PC-3 (cell line): ENCODE measurements at regions of chr17 and their contacts with region 1.

Region 1: GRCh38 chr17:81738616-81739393 is 26.7 kb downstream of the SLC25A10 start:
- DNase-seq: no peak
- ATAC-seq: no peak
- H3K4me3 ChIP-seq: no peak overlapping the region
- H3K27ac ChIP-seq: no peak overlapping the region
- H3K4me1 ChIP-seq: peaks cover 24% of the 10 kb centered on the region
- H3K27me3 ChIP-seq: no peaks in the 10 kb centered on the region
- CTCF ChIP-seq: no peak

Region 2: DNA sequence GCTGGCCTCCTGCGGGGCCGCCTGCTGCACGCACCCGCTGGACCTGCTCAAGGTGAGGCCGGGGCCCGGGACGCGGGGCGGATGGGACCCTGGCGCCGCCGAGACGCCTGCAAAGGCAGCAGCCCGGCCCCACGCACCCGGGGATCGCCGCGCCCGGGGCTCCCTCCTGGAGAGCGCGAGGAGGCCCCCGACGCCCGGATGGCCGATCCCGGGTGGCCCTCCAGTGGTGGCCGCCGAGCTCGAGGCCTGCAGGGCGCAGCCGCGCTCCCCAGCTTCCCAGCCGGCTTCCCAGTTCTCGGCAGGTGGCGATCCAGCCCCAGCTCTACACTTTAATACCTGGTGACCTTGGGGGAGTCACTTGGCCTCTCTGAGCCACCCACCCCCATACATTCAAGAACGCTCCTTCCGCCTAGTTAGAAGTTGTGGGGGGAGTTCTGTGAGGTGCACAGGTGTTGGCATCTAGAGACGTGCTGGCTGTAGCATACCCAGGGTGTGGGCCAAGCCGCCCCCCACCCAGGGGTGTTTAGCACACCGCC is 26.3 kb before region 1 on chr17:
- CTCF ChIA-PET with region 1: no interaction called
- POLR2A ChIA-PET with region 1: interaction called, 16 read pairs
- intact Hi-C with region 1: no loop called
- DNase-seq: peak; percentile 25
- ATAC-seq: peak; percentile 25
- H3K4me3 ChIP-seq: peak overlapping the region; percentile 89
- H3K27ac ChIP-seq: peak overlapping the region; percentile 15; the same call in 1 of the 2 replicates
- H3K4me1 ChIP-seq: peaks cover 37% of the 10 kb centered on the region
- H3K27me3 ChIP-seq: no peaks in the 10 kb centered on the region
- CTCF ChIP-seq: no peak; the same call in 1 of the 2 replicates

Region 3: GRCh38 chr17:81814748-81815645 is 76.2 kb after region 1 on chr17:
- CTCF ChIA-PET with region 1: no interaction called
- POLR2A ChIA-PET with region 1: interaction called, 11 read pairs
- intact Hi-C with region 1: no loop called
- DNase-seq: no peak
- ATAC-seq: peak; percentile 36
- H3K4me3 ChIP-seq: no peak overlapping the region
- H3K27ac ChIP-seq: no peak overlapping the region
- H3K4me1 ChIP-seq: peaks cover 10% of the 10 kb centered on the region
- H3K27me3 ChIP-seq: no peaks in the 10 kb centered on the region
- CTCF ChIP-seq: no peak